ENCODE measurements at regions of chr5 and their contacts with region 1.

Region 1: GRCh38 chr5:127757576-127757975 is 54.4 kb downstream of the CCDC192 start:
- DNase-seq: peak; percentile 48
- ATAC-seq: peak; percentile 84
- H3K4me3 ChIP-seq: no peak overlapping the region
- H3K27ac ChIP-seq: no peak overlapping the region
- H3K4me1 ChIP-seq: no peaks in the 10 kb centered on the region
- H3K27me3 ChIP-seq: no peaks in the 10 kb centered on the region
- CTCF ChIP-seq: peak; percentile 44 to 63 (median 55); a peak in 5 of 6 replicates
- POLR2A ChIP-seq: no peak
- RAD21 ChIP-seq: peak; percentile 84

Region 2: GRCh38 chr5:128083033-128083810 is 325.6 kb after region 1 on chr5 and contains the start of gene SLC12A2:
- CTCF ChIA-PET with region 1: interaction called, 3 read pairs
- POLR2A ChIA-PET with region 1: no interaction called
- RAD21 ChIA-PET with region 1: interaction called in 1 of 2 experiments, 3 read pairs
- intact Hi-C with region 1: loop called (anchors 5 kb)
- DNase-seq: peak; percentile 95
- ATAC-seq: peak; percentile 73
- H3K4me3 ChIP-seq: peak within 1 kb of the TSS; percentile 75 to 77
- H3K27ac ChIP-seq: peak within 1 kb of the TSS; percentile 97
- H3K4me1 ChIP-seq: peaks cover 14 to 25% of the 10 kb centered on the region in 2 experiments; a peak in 3 of 4 replicates
- H3K27me3 ChIP-seq: no peaks in the 10 kb centered on the region
- CTCF ChIP-seq: no peak
- POLR2A ChIP-seq: peak; percentile 84
- RAD21 ChIP-seq: 0 out of 2 replicates have a peak, but pooled peaks have one; percentile 2
- total RNA-seq, gene SLC12A2: 41.2 TPM

Region 3: GRCh38 chr5:128201065-128201926 is 443.7 kb after region 1 on chr5:
- CTCF ChIA-PET with region 1: no interaction called
- POLR2A ChIA-PET with region 1: no interaction called
- RAD21 ChIA-PET with region 1: no interaction called
- intact Hi-C with region 1: loop called (anchors 5 kb)
- DNase-seq: no peak
- ATAC-seq: peak; percentile 60
- H3K4me3 ChIP-seq: no peak overlapping the region
- H3K27ac ChIP-seq: no peak overlapping the region
- H3K4me1 ChIP-seq: peaks cover 9 to 18% of the 10 kb centered on the region in 2 experiments
- H3K27me3 ChIP-seq: no peaks in the 10 kb centered on the region
- CTCF ChIP-seq: peak; percentile 19 to 66 (median 39); a peak in 4 of 6 replicates
- POLR2A ChIP-seq: no peak
- RAD21 ChIP-seq: peak; percentile 53

Region 4: DNA sequence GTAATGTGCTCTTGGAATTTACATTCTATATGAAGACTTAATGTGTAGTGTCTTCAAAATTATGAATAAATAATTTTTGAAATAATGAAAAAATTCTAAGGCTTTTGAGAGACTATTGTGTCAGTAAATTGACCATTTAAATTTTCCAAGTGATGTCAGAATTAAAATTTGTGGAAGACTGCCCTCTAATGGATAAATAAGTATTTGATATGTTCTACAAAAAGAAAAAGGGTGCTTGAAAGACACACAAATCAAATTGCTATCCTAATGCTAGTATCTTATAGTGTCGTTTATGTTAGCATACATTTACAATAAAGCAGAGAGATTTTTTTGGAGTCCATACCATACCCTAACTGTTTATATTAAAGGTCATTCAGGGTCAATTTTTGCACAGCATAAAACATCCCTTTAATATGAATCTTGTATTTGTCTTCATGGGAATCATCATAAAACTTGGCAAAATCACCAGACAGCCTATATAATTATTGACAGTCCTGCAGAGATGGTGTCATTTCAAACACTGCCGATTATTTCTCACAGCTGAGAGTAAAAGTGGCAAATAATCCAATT is 1086.9 kb after region 1 on chr5:
- CTCF ChIA-PET with region 1: no interaction called
- POLR2A ChIA-PET with region 1: no interaction called
- RAD21 ChIA-PET with region 1: no interaction called
- intact Hi-C with region 1: loop called (anchors 5 kb)
- DNase-seq: no peak
- ATAC-seq: no peak
- H3K4me3 ChIP-seq: no peak overlapping the region
- H3K27ac ChIP-seq: no peak overlapping the region
- H3K4me1 ChIP-seq: no peaks in the 10 kb centered on the region
- H3K27me3 ChIP-seq: no peaks in the 10 kb centered on the region
- CTCF ChIP-seq: peak in 2 of 3 experiments; percentile 35 to 46; a peak in 3 of 6 replicates
- POLR2A ChIP-seq: no peak
- RAD21 ChIP-seq: peak; percentile 68